PC-3 (cell line): ENCODE measurements at regions of chr7 and their contacts with region 1.

Region 1: DNA sequence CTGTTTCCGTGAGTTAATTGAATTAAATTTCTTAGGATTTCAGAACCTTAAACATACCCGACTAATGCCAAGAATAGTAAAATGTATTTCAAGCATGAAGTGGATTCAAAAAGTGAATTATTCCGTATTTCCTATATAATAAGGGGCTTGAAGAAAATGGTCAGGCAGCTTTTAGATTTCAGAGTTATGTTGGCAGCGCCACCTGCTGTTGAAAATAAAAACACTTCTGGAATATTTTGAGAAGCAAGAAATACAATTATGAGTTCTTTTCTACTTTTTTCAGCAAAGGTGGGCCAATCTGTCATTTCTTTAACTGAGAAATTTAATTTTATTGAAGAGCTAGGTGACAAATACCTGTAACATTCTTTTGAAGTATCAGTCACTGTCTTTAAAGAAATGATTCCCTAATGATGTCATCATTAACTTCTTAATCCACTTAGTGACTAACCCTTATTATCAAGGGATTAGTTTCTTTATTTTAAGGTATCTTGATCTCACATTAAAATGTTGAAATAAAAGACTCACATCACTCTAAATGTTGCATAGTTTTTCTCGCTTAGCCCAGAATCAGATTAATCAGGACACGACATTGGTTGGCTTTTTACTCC is 36.6 kb upstream of the AGR3 start:
- DNase-seq: peak; percentile 70
- ATAC-seq: no peak
- H3K4me3 ChIP-seq: peak overlapping the region; percentile 49; the same call in 1 of the 2 replicates
- H3K27ac ChIP-seq: peak overlapping the region; percentile 92
- H3K4me1 ChIP-seq: peaks cover 74% of the 10 kb centered on the region
- H3K27me3 ChIP-seq: no peaks in the 10 kb centered on the region
- CTCF ChIP-seq: peak; percentile 85

Region 2: DNA sequence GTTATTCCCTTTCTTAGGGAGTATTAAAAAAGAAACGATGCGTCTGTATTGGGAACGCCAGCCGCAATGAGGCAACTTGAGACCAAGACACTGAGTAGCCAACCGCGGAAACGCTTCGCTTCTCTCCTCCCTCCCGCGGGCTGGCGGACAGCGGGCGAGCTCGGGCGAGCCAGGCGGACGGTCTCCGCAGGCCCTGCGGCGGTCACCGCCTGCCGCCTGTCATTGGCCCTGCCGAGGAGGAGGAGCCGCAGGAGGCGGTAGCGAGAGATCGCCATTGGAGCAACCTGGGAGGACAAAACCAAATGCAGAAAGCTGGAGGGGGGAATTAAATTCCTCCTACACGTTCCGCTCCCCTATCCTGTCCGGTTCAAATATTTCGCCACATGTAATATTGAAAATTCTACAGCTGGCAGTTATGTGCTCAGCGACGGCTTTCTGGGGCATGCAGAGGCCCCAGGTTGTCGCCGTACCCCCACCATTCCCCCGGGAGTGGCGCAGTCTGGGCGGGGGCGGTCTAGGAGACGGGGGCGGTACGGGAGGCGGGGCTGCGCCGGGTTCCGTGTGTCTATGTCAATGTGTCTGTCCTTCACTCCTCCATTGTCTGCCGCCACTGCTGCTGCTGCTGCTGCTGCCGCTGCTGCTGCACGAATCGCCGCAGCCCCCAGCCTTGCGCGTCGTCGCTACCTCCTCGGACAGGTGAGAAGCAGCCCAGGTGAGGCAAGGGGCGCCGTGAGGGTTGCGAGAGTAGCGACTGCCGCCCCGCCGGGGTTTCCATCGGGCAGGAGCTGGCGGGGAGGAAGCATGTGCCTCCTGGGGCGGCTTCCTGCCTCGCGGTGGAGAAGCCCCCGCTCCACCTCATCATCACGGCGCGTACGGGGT is 272.6 kb before region 1 on chr7 and contains the starts of genes ANKMY2 and BZW2:
- CTCF ChIA-PET with region 1: no interaction called
- POLR2A ChIA-PET with region 1: no interaction called
- intact Hi-C with region 1: loop called (anchors 5 kb)
- DNase-seq: peak; percentile 96
- ATAC-seq: peak; percentile 74
- H3K4me3 ChIP-seq: peak within 1 kb of the TSS; percentile 95
- H3K27ac ChIP-seq: peak within 1 kb of the TSS; percentile 50
- H3K4me1 ChIP-seq: peaks cover 38% of the 10 kb centered on the region
- H3K27me3 ChIP-seq: no peaks in the 10 kb centered on the region
- CTCF ChIP-seq: no peak
- total RNA-seq, gene ANKMY2: 7.7 and 8.5 TPM in 2 replicates
- total RNA-seq, gene BZW2: 86.1 and 94.1 TPM in 2 replicates

Region 3: GRCh38 chr7:16753102-16753931 is 165.1 kb before region 1 on chr7 and contains the start of gene TSPAN13:
- CTCF ChIA-PET with region 1: no interaction called
- POLR2A ChIA-PET with region 1: no interaction called
- intact Hi-C with region 1: loop called (anchors 5 kb)
- DNase-seq: peak; percentile 95
- ATAC-seq: peak; percentile 87
- H3K4me3 ChIP-seq: peak within 1 kb of the TSS; percentile 88
- H3K27ac ChIP-seq: peak within 1 kb of the TSS; percentile 51
- H3K4me1 ChIP-seq: peaks cover 28% of the 10 kb centered on the region
- H3K27me3 ChIP-seq: no peaks in the 10 kb centered on the region
- CTCF ChIP-seq: no peak
- total RNA-seq, gene TSPAN13: 27.6 and 34.9 TPM in 2 replicates

Region 4: DNA sequence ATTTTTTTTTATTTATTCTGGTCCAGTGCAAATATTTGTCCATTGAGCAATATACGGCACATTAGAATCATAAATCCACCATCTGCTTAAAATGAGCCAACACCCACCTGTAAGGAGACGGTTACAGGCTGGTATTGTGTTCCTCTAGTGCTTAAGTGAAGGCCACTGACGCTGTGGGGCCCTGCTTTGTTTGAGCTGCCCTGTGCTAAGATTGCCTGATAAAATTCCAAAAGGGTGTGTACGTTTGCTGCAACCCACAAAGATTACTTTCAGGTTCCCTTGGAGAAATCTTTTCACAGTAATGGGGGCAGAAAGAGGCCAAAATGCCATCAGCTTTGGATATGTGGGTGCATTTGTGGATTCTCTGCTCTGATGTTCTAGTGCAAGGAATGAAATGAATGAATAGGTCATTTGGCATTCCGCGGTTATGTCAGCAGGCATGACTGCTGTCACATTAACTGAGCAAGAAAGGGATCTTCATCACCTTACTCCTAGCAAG is 71.0 kb before region 1 on chr7:
- CTCF ChIA-PET with region 1: no interaction called
- POLR2A ChIA-PET with region 1: no interaction called
- intact Hi-C with region 1: loop called (anchors 2 kb)
- DNase-seq: peak; percentile 95
- ATAC-seq: peak; percentile 99
- H3K4me3 ChIP-seq: peak overlapping the region; percentile 61
- H3K27ac ChIP-seq: peak overlapping the region; percentile 97
- H3K4me1 ChIP-seq: peaks cover 38% of the 10 kb centered on the region
- H3K27me3 ChIP-seq: no peaks in the 10 kb centered on the region
- CTCF ChIP-seq: no peak

Region 5: GRCh38 chr7:16942929-16943509 is 24.6 kb after region 1 on chr7:
- CTCF ChIA-PET with region 1: no interaction called
- POLR2A ChIA-PET with region 1: no interaction called
- intact Hi-C with region 1: no loop called
- DNase-seq: no peak
- ATAC-seq: no peak
- H3K4me3 ChIP-seq: no peak overlapping the region
- H3K27ac ChIP-seq: no peak overlapping the region
- H3K4me1 ChIP-seq: no peaks in the 10 kb centered on the region; the same call in 1 of the 2 replicates
- H3K27me3 ChIP-seq: no peaks in the 10 kb centered on the region
- CTCF ChIP-seq: no peak

Region 6: GRCh38 chr7:17144322-17144721 is 225.9 kb after region 1 on chr7:
- CTCF ChIA-PET with region 1: no interaction called
- POLR2A ChIA-PET with region 1: no interaction called
- intact Hi-C with region 1: loop called (anchors 5 kb)
- DNase-seq: peak; percentile 78
- ATAC-seq: peak; percentile 51
- H3K4me3 ChIP-seq: peak overlapping the region; percentile 2; the same call in 1 of the 2 replicates
- H3K27ac ChIP-seq: peak overlapping the region; percentile 95
- H3K4me1 ChIP-seq: peaks cover 67% of the 10 kb centered on the region
- H3K27me3 ChIP-seq: no peaks in the 10 kb centered on the region
- CTCF ChIP-seq: no peak